GM13977 (cell line): ENCODE measurements at regions of chr2 and their contacts with region 1.

Region 1: DNA sequence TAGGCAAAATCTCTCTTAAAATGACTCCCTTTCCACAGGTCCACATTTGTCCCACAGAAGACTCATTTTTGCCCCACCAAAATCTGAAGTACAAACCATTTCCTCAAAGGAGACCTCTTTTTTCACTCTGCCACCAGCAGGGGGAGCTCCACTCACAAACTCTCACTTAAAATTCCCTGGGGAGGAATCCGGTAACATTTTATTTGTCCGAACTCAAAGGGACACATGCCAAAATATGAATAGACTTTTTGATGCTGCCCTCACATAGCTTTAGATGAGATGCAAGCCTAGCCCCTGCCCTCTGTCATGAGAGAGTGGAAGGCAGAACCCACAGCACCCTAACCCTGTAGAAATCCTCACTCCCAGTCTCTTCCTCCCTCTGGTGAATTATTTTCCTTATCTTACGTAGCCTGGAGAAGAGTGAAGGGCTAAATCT is 57.1 kb downstream of the RMDN2 start:
- DNase-seq: peak; percentile 24
- CTCF ChIP-seq: peak; percentile 57

Region 2: DNA sequence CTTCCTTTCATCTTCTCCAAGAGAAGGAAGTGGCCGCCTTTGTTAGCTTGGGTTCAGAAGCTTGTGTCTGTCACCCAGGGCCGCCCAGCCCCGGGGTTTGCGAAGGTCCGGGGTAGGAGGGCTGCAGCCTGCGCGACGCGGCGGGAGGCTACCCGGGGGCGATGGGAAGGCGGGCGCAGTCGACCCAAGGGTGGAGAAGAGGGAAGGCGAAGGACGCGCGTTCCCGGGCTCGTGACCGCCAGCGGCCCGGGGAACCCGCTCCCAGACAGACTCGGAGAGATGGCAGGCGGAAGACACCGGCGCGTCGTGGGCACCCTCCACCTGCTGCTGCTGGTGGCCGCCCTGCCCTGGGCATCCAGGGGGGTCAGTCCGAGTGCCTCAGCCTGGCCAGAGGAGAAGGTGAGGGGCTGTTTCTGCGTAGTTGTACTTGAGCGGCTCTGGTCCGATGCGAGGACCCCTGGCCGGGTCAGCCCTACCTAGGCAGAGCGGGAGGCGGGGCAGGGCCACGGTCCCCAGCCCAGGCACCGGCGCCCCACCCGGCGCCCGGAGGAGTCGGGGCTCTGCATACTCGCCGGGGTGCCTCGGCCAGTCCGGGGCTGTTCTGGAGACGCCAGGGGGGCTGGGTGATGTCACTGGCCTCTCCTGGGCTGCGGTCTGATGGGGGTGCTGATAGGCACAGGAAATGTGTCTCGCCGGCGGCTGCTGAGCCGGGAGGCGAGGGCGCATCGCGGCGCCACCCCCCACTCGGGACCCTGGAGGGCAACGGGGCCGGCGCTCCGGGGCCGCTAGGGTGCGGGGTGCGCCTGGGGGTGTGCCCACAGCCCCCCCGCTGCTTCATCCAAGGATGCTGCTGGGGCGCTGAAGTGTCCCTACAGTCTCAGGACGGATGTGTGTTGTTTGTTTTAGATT is 637.5 kb before region 1 on chr2 and contains the start of gene QPCT:
- in situ Hi-C with region 1: no loop called
- DNase-seq: peak; percentile 74
- CTCF ChIP-seq: no peak

Region 3: GRCh38 chr2:37523814-37524362 is 458.3 kb before region 1 on chr2:
- in situ Hi-C with region 1: no loop called
- DNase-seq: no peak
- CTCF ChIP-seq: no peak

Region 4: DNA sequence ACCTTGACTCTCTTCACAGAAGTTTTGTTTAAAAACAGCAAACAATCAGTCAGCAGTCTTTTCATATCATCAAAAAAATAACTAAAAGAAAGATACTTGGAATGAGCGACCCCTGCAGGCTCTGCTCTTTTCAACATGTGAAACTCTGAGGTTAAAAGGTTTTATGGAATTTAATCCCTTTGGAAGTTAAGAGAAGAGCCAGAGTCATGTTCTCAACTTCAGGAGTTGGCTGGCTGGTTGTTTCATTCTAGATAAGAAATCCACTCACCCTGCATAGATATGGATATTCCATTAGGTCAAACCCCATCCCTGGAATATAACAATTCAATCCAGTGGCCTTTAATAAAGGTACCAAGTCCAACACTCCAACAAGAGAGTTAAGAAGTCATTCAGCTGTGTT is 172.6 kb before region 1 on chr2:
- in situ Hi-C with region 1: no loop called
- DNase-seq: no peak
- CTCF ChIP-seq: peak; percentile 17

Region 5: GRCh38 chr2:37877457-37878315 is 104.5 kb before region 1 on chr2:
- in situ Hi-C with region 1: no loop called
- DNase-seq: peak; percentile 39
- CTCF ChIP-seq: peak; percentile 68

Region 6: DNA sequence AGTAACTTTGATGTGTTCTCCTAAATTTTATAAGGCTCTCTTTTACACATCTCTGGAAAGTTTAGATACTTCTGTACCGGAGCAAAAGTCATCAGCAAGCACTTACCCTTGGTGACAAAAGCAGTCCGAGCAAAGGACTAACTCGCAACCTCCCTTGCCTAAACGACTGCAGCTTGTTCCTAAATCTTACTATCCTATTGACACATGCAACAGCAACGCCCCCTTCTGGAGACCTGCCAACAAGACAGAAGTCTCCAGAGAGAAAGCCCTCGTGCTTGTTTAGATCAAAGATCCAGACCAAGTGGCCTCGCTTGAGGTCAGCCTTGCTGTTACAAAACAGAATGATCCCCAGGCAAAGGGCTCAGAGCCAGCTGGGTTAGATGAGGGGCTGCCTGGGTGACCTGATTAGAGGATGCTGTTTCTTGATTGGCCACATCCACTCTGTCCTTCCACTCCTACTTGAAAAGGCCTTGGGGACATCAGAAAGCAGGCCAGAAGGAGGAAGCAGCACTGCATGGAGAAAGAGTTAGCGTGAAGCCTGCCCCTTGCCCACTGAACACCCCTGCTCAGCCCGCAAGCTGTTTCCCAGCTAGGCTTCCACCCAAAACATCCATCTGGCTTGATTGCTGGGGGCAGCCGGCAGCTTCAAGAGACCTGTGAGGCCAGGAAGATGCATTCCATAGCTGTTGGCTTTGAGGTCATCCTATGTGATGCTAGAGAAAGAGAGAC is 526.3 kb after region 1 on chr2:
- in situ Hi-C with region 1: loop called (anchors 25 kb)
- DNase-seq: peak; percentile 77
- CTCF ChIP-seq: peak; percentile 88